AG04449 (cell line): ENCODE measurements at regions of chr16 and their contacts with region 1.

Region 1: DNA sequence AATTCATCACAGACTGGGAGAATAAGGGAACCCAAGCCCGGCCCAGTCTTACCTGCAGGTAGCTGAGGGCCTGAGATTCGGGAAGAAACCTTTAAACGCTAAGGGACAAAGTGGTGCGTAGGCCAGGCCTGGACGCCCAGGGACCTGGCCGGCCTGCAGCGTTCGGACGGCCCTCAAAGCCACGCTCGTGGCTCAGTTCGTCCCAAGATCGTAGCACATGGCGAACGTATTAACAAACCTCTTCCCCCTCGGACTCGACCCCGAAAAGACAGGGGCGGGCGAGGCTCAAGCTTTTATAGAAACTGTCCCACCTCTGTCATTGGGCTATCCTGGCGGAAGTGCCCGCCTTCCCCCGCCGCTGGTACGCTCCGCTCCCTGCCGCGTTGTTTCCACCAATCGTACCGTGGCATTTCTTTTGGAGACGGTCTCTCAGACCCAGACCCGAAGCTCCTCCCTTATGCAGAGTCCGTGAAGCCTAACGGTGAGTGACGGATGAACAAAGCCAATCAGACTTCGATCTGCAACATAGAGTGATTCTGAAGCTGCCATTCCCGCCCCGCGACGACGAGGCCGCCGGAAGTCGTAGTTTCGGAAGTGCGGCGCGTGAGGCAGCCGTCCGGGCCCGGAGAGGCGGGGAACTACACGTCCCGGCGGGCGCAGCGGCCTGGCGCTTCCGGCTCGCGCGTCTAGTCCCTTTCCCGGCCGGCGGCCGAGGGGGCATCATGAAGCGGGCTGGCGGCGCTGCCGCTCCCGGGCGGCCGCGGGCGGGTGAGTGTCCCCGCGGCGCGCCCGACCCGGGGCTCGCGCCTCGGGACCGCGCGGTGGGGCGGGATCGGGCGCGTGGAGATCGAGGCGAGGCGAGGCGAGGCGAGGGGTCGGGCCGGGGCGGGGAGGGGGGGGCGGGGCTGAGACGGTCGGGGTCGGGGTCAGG is at the start of gene TRAF7:
- DNase-seq: peak; percentile 100
- H3K4me3 ChIP-seq: peak within 1 kb of the TSS; percentile 99
- CTCF ChIP-seq: no peak

Region 2: DNA sequence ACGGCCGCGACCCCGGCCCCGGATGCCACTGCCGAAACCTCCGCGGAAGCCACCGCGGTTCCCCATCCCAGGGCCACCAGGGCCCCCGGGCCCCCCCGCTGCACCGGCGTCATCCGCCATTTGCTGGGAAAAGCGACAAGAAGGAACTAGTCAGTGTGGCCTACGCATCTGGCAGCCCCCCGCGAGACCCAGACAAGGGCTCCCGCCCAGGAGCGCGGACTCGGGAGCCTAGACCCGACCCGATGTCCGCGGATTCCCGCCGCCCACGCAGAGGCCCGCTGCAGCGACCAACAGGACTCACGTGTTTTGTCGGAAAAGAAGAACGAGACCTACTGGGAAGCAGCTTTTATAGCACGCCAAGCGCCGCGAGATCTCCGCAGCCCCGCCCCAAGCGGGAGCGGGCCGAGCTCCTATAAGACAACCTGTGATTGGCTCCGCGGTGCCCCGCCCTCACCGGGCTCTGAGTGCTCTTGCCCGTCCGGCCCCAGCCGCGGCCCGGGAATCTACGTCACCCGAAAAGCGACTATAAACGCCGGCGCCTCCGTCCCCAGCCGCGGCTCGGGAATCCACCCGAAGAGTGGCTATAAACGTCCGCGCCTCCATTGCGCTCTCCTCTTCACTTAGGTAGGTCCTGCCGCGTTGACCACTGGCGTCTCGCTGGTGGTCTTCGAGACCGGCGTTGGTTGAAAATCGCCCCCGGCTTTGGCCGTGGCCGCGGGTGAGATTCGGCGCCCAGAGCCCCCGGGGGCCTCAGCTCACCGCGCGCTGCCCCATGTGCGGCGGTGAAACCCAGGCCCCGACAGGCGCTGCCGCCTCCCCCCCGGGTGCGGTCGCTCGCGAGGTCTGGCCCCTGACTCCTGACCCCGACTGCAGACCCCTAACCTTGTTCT is 190.6 kb before region 1 on chr16 and contains the start of gene RPS2:
- CTCF ChIA-PET with region 1: no interaction called
- POLR2A ChIA-PET with region 1: interaction called, 14 read pairs
- DNase-seq: peak; percentile 89
- H3K4me3 ChIP-seq: peak within 1 kb of the TSS; percentile 92
- CTCF ChIP-seq: no peak

Region 3: GRCh38 chr16:2003827-2004641 is 151.3 kb before region 1 on chr16:
- CTCF ChIA-PET with region 1: interaction called, 38 read pairs
- POLR2A ChIA-PET with region 1: interaction called, 6 read pairs
- DNase-seq: no peak
- H3K4me3 ChIP-seq: peak overlapping the region; percentile 6; the same call in 1 of the 2 replicates
- CTCF ChIP-seq: peak; percentile 97

Region 4: GRCh38 chr16:2033057-2033908 is 122.1 kb before region 1 on chr16:
- CTCF ChIA-PET with region 1: interaction called, 3 read pairs
- POLR2A ChIA-PET with region 1: interaction called, 10 read pairs
- DNase-seq: no peak
- H3K4me3 ChIP-seq: peak overlapping the region; percentile 53
- CTCF ChIP-seq: no peak

Region 5: GRCh38 chr16:2194852-2195321 is 39.5 kb after region 1 on chr16:
- CTCF ChIA-PET with region 1: interaction called, 4 read pairs
- POLR2A ChIA-PET with region 1: interaction called, 11 read pairs
- DNase-seq: no peak
- H3K4me3 ChIP-seq: no peak overlapping the region
- CTCF ChIP-seq: peak; percentile 28